ENCODE measurements at regions of chr7 and their contacts with region 1.

Region 1: DNA sequence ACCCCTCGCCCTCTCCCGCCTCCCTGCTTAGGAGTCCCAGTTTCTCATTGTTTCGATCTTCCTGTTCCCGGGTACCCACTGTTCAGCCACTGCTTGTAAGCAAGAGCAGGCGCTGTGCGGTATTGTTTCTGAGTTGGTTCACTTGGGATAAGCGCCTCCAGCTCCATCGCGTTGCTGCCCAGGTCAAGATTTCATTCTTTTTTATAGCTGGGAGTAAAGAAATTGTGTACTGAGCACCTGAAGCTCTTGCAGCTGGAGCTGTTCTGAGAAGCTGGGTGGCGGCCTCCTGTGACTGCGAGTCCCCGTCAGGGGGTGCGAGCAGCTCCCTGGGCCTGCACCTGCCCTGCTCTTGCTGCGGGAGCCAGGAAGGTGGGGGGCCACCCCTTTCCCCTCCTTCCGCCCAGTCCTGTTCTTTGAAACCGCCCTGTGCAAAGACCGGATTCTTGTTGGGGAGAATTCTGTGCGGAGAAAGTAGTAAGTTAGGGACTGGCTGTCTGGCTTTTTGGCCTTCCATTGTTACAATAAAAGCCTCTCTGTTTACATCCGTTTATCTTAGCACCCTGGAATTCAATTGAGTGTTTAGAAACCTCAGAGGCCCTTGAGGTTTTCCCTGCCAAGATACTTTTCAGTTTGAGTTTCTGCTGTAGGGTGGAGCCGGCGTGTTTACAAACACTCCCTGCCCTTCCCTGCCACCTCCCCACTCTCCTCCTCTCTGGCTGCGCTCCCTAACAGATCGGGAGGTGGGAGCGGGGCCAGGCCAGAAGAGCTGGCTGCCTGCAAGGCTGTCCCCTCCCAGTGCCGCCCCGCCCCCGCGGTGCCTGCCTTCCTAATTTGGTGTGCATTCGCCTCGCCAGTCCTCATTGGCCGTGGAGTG is 30.8 kb upstream of the AP5Z1 start:
- DNase-seq: peak; percentile 99
- H3K4me3 ChIP-seq: peak overlapping the region; percentile 12 to 39 (median 26)
- H3K27ac ChIP-seq: peak overlapping the region; percentile 93 to 96 (median 93)
- H3K4me1 ChIP-seq: peaks cover 0 to 62% (median 57%) of the 10 kb centered on the region in 4 donors
- H3K27me3 ChIP-seq: no peaks in the 10 kb centered on the region
- CTCF ChIP-seq: no peak
- EP300 ChIP-seq: peak in 3 of 4 donors; percentile 31 to 74 (median 59)
- POLR2A ChIP-seq: no peak

Region 2: DNA sequence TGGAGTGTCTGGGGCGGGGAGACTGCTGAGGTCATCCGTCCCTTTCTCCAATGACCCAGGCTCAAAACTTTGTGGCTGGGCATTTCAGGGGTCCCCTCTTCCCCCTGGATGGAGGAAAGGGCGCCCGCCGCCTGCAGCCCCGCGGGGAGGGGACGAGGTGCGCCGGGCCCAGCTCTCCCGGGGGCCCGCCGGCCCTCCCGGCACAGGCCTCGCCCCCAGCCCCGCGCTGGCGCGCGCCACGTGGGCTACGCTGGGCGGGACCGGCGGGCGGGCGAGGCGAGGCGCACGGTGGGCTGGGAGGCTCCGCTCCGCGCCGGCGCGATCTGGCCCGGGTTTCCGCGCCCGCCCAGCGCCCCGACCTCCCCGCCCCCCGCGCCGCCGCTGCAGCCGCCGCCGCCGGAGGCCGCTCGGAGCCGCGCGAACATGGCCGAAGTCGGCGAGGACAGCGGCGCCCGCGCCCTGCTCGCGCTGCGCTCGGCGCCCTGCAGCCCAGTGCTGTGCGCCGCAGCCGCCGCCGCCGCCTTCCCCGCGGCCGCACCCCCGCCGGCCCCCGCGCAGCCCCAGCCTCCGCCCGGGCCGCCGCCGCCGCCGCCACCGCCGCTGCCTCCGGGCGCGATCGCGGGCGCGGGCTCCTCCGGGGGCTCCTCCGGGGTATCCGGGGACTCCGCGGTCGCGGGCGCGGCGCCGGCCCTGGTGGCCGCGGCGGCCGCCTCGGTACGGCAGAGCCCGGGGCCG is 62.6 kb before region 1 on chr7 and contains the start of gene FOXK1:
- intact Hi-C with region 1: loop called (anchors 5 kb)
- DNase-seq: peak; percentile 88
- H3K4me3 ChIP-seq: peak within 1 kb of the TSS; percentile 76 to 98 (median 88)
- H3K27ac ChIP-seq: peak within 1 kb of the TSS; percentile 93 to 96 (median 94)
- H3K4me1 ChIP-seq: peaks cover 0 to 40% (median 30%) of the 10 kb centered on the region in 4 donors
- H3K27me3 ChIP-seq: no peaks in the 10 kb centered on the region
- CTCF ChIP-seq: no peak
- EP300 ChIP-seq: no peak
- POLR2A ChIP-seq: peak in 1 of 2 donors; percentile 33
- total RNA-seq, gene FOXK1: 15.8 to 47.1 (median 18.0) TPM

Region 3: DNA sequence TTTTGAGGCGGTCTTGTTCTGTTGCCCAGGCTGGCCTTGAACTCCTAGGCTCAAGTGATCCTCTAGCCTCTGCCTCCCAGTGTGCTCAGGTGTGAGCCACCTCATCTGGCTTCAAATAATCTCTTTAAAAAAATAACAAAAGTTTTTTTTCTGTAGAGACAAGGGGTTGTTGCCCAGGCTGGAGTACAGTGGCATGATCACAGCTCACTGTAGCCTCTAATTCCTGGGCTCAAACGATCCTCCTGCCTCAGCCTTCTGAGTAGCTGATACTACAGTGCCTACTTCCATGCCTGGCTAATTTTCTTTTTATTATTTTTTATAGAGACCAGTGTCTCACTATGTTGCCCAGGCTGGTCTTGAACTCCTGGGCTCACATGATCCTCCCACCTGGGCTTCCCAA is 50.9 kb before region 1 on chr7:
- intact Hi-C with region 1: loop called (anchors 2 kb)
- DNase-seq: no peak
- H3K4me3 ChIP-seq: no peak overlapping the region
- H3K27ac ChIP-seq: peak overlapping the region; percentile 76 to 94 (median 84)
- H3K4me1 ChIP-seq: peaks cover 0 to 90% (median 78%) of the 10 kb centered on the region in 4 donors
- H3K27me3 ChIP-seq: no peaks in the 10 kb centered on the region
- CTCF ChIP-seq: no peak
- EP300 ChIP-seq: no peak
- POLR2A ChIP-seq: no peak

Region 4: DNA sequence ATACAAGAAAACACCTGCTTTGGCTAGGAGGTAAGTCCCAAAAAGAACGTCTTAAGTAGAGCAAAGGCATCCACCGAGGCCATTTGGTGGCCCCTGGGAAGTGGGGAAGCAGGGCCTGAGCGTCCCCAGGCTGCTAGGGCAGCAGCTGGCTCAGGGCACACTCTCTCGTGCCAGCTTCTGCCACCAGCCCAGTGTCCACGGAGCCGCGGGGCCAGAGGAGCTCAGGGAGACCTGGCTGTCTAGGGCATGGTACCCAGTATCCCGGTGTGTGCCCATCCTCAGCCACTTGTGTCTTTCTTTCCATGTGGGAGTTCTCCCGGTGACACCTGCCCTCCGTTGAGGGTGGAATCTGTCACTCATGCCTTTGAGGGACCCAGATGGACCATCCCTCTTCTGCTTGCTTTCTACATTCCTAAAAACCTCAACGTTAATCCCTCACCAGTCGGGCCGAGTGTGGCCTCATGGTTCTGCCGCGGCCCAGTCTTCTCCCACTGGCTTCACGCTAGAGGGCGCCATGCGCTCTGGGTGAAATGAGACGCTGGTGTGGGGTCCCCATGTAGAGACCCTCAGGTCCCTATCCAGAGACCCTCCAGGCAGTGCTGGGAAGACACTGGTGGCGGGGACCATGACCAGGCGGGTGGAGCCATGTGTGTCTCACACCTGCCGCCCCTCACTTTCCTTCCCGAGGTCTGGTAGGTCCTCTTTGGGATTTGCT is 21.3 kb after region 1 on chr7:
- intact Hi-C with region 1: loop called (anchors 1 kb)
- DNase-seq: no peak
- H3K4me3 ChIP-seq: peak overlapping the region in 3 of 4 donors; percentile 47 to 53 (median 51)
- H3K27ac ChIP-seq: peak overlapping the region; percentile 82 to 99 (median 96)
- H3K4me1 ChIP-seq: peaks cover 0 to 62% (median 51%) of the 10 kb centered on the region in 4 donors
- H3K27me3 ChIP-seq: no peaks in the 10 kb centered on the region
- CTCF ChIP-seq: peak in 3 of 4 experiments; percentile 9 to 48 (median 26)
- EP300 ChIP-seq: no peak
- POLR2A ChIP-seq: no peak

Measured in sigmoid colon (tissue), 7 donors.